Right ventricle myocardium inferior (tissue), 1 donor: ENCODE measurements at regions of chr2 and their contacts with region 1.

Region 1: DNA sequence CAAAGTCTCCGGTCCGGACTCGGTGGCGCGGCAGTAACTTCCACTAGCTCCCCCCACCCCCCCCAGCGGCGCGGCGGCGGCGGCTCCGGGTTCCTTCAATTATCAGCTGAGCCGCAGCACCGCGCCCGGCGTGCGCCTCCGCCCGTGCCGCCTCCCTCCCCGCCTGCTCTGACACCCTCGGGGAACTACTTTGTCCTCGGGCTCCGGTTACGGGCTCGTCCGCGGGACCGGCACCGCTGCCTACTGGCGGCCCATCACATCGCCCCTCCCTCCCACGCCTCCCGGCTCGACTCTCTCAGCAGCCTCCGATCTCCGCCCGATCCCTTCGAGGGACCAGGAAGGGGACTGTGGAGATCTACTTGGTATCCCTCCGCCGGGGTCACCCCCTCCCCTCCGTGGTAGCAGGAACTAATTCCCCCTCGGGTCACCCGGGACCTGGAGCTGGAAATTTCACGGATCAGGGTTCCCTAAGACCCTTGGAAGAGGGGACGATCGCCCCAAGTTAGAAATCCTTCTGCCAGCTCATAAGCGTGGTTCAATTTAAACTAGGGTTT is at the start of gene TRIP12:
- DNase-seq: peak; percentile 96
- ATAC-seq: peak; percentile 93
- total RNA-seq, gene TRIP12: 180 TPM

Region 2: DNA sequence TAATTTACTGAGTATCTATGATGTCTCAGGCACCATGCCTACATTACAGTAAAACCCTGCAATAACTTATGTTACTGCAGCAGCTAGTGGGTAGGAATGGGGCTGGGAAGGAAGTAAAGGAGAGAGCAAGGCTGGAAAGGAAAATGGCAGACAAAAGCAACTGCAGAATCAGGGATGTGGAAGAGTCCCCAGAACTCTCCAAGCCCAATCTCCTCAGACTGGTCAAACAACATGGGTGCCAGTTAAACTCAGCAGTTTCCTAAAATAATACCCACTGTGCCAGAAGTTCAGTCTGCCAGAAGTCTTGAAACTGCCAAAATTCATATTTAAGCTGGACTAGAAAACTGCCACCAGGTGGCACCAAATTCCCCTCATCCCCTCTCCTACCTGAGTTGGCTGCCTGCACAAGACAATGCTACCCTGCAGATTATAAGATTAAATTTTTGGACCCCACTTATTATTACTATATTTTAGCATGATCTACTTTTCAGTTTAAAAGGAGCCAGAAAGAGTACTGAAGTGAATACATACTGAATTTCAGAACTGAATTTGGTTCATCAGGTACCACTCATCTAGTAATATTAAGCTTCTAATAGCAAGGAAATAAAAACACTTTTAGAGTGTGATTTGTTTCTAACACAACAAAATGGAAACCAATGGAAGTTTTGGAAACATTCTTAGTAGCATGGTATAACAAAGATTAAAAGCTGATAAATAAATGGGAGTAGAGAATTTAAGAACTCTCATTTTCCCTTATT is 120.8 kb before region 1 on chr2:
- intact Hi-C with region 1: loop called (anchors 2 kb)
- DNase-seq: no peak
- ATAC-seq: peak; percentile 37

Region 3: GRCh38 chr2:230018153-230018552 is 96.2 kb after region 1 on chr2:
- intact Hi-C with region 1: no loop called
- DNase-seq: no peak
- ATAC-seq: no peak